PC-9 (cell line): ENCODE measurements at regions of chr18 and their contacts with region 1.

Region 1: DNA sequence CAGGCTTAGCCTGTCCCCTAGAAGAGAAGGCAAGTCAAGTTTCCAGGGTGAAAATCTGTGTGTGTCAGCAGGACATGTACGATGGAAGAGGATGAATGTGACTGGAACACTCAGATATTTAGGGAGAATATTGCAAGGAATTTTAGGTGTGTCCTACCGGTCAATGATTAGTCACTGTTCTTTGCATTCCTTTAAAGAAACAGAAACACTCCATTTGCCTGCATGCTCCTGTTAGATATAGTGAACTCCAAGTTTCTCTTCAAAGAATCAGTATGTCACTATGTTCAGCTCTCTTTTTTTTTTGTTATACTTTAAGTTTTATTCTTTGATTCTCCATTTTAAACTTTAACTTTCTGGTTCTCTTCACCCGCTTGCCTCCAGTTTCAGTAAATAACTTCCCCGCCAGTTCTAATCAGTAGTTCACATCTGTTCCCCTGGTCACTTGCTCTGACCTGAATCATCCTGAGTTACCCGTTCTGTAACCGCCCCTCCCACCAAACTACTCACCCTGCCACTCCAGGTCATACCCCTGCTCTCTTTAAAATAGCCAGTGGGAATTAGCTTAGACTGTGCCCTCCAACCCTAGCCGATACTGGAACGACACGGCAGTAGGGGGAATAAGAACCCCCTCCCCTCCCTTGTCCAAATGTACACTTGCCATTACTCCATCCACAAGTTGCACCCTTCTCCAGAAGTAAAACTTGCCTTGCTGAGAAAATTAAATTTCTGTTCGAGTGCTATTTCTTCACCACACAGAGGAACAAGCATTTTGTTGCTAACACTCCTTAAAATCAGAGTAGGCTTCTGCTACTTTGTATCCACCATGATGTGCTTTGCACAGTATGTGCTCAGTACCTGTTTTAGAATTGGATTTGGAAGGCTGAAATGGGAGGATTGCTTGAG is 268.4 kb downstream of the METTL4 start:
- DNase-seq: peak; percentile 83 to 92
- H3K4me3 ChIP-seq: peak overlapping the region; percentile 49; the same call in 1 of the 2 replicates
- H3K27ac ChIP-seq: peak overlapping the region; percentile 99
- H3K4me1 ChIP-seq: peaks cover 59% of the 10 kb centered on the region
- H3K27me3 ChIP-seq: no peaks in the 10 kb centered on the region
- CTCF ChIP-seq: no peak

Region 2: GRCh38 chr18:1663879-1664705 is 638.8 kb before region 1 on chr18:
- CTCF ChIA-PET with region 1: no interaction called
- POLR2A ChIA-PET with region 1: no interaction called
- intact Hi-C with region 1: loop called (anchors 5 kb)
- DNase-seq: peak in 1 of 2 experiments; percentile 46
- H3K4me3 ChIP-seq: no peak overlapping the region
- H3K27ac ChIP-seq: no peak overlapping the region
- H3K4me1 ChIP-seq: no peaks in the 10 kb centered on the region
- H3K27me3 ChIP-seq: no peaks in the 10 kb centered on the region
- CTCF ChIP-seq: peak; percentile 80

Region 3: DNA sequence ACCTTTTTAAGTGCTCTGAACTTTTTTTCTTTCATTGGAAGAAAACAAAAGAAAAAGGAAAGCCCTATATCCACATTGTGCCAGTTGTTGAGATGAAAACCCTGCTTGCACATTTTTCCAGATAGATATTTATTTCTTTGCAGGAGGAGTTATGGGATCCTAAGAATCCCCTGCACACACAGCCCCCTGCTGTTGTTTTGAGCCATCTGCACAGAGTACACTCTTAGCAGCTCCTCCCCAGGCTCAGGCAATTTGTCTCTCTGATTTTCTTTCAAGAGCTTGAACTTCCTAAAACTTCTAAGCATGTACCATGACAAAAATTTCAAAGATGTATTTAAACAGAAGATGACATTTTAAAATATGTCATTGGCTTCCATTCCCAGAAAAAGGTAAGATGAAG is 168.5 kb before region 1 on chr18:
- CTCF ChIA-PET with region 1: no interaction called
- POLR2A ChIA-PET with region 1: interaction called, 10 read pairs
- intact Hi-C with region 1: no loop called
- DNase-seq: no peak
- H3K4me3 ChIP-seq: no peak overlapping the region
- H3K27ac ChIP-seq: no peak overlapping the region
- H3K4me1 ChIP-seq: peaks cover 5% of the 10 kb centered on the region
- H3K27me3 ChIP-seq: no peaks in the 10 kb centered on the region
- CTCF ChIP-seq: no peak

Region 4: DNA sequence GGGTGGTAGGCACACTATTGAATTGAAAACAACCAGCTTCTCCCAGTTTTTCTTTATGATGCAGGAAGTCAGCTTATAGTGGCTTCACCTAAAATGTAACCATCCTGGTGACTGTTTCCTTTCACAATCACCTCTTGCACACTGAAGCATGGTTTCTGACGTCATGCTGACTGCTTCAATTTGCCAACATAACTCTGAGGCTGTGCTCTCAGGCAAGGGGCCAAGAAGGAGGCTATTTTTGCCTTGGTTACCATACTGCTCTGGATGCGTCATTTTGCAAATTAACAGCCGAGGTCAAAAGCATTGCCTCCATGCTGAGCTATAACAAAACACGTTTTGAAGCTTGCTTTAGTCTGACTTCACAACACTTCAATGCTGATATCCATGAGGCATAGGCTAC is 129.4 kb before region 1 on chr18:
- CTCF ChIA-PET with region 1: no interaction called
- POLR2A ChIA-PET with region 1: no interaction called
- intact Hi-C with region 1: loop called (anchors 1 kb)
- DNase-seq: peak; percentile 53 to 73
- H3K4me3 ChIP-seq: no peak overlapping the region
- H3K27ac ChIP-seq: no peak overlapping the region
- H3K4me1 ChIP-seq: peaks cover 26% of the 10 kb centered on the region
- H3K27me3 ChIP-seq: no peaks in the 10 kb centered on the region
- CTCF ChIP-seq: no peak

Region 5: DNA sequence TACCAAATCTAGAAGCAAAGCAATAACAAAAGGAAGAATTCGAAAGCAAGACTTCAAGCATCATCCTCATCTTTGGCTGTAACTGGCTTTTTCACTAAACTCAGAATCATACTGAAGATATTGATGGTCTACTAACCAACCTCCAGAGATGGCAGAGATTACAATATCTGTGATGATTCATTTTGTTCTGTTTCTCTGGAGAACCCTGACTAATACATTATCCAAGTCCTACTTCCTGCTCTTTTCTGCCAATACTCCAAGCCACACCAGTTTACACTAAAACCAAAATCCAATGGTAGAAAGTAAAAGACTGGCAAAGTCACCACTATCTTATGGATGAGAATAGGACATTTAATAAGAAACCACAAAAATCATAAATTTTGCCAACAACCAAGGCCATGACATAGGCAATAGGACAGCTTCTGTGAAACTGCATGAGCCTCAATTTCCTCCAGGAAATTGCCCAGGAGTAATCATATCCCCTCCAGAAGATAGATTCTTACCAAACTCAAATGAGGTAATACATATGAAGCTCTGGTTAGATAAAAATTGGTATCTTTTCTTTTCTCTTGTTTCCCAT is 108.6 kb after region 1 on chr18:
- CTCF ChIA-PET with region 1: no interaction called
- POLR2A ChIA-PET with region 1: interaction called, 4 read pairs
- intact Hi-C with region 1: loop called (anchors 1 kb)
- DNase-seq: peak; percentile 12 to 75
- H3K4me3 ChIP-seq: no peak overlapping the region; the same call in 1 of the 2 replicates
- H3K27ac ChIP-seq: peak overlapping the region; percentile 70
- H3K4me1 ChIP-seq: peaks cover 34% of the 10 kb centered on the region
- H3K27me3 ChIP-seq: no peaks in the 10 kb centered on the region
- CTCF ChIP-seq: no peak

Region 6: GRCh38 chr18:2515908-2516625 is 213.2 kb after region 1 on chr18:
- CTCF ChIA-PET with region 1: no interaction called
- POLR2A ChIA-PET with region 1: no interaction called
- intact Hi-C with region 1: loop called (anchors 5 kb)
- DNase-seq: peak; percentile 47 to 70
- H3K4me3 ChIP-seq: no peak overlapping the region
- H3K27ac ChIP-seq: peak overlapping the region; percentile 72
- H3K4me1 ChIP-seq: peaks cover 19% of the 10 kb centered on the region
- H3K27me3 ChIP-seq: no peaks in the 10 kb centered on the region
- CTCF ChIP-seq: no peak